Heart left ventricle (tissue), 16 donors: ENCODE measurements at regions of chr7 and their contacts with region 1.

Region 1: GRCh38 chr7:55255496-55256435 is 109.4 kb upstream of the LANCL2 start:
- DNase-seq: peak; percentile 76 to 88 (median 79)
- ATAC-seq: peak; percentile 87 to 97 (median 94)
- H3K4me3 ChIP-seq: peak overlapping the region; percentile 38 to 72 (median 60)
- H3K27ac ChIP-seq: peak overlapping the region in 5 of 12 donors; percentile 3 to 58 (median 45)
- H3K4me1 ChIP-seq: peaks cover 0 to 19% (median 10%) of the 10 kb centered on the region in 12 donors
- H3K27me3 ChIP-seq: peaks cover 0 to 41% (median 14%) of the 10 kb centered on the region in 9 donors
- CTCF ChIP-seq: peak; percentile 71 to 94 (median 88)
- POLR2A ChIP-seq: no peak

Region 2: GRCh38 chr7:54773472-54774399 is 482.0 kb before region 1 on chr7:
- intact Hi-C with region 1: loop called in 9 of 10 experiments (anchors 1 to 5 kb)
- DNase-seq: peak; percentile 77 to 84 (median 80)
- ATAC-seq: peak; percentile 82 to 97 (median 93)
- H3K4me3 ChIP-seq: peak overlapping the region in 10 of 12 donors; percentile 6 to 60 (median 39)
- H3K27ac ChIP-seq: no peak overlapping the region
- H3K4me1 ChIP-seq: peaks cover 0 to 5% (median 0%) of the 10 kb centered on the region in 12 donors
- H3K27me3 ChIP-seq: peaks cover 0 to 19% (median 0%) of the 10 kb centered on the region in 9 donors
- CTCF ChIP-seq: peak; percentile 61 to 89 (median 82)
- POLR2A ChIP-seq: no peak

Region 3: DNA sequence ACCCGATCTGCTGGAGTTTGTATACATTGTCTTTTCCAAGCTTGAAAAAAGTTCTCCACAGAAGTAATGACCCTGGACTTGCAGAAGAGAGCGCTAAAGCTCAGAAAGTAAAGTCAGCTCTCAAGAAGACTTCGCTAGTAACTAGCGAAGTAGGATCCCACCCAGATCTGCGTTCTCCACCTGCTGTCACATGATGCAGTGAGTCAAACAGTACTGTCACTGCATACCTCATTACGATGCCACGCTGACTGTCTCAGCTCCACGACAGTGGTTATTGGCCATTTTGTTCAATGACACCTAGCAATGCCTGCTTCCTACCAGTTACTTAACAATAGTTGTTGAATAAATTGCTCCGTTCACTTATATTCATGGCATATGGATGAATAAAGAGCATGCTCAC is 467.1 kb before region 1 on chr7:
- intact Hi-C with region 1: loop called in 7 of 10 experiments (anchors 1 to 5 kb)
- DNase-seq: no peak
- ATAC-seq: peak; percentile 55 to 82 (median 76)
- H3K4me3 ChIP-seq: no peak overlapping the region
- H3K27ac ChIP-seq: no peak overlapping the region
- H3K4me1 ChIP-seq: peaks cover 0 to 8% (median 2%) of the 10 kb centered on the region in 12 donors
- H3K27me3 ChIP-seq: no peaks in the 10 kb centered on the region
- CTCF ChIP-seq: peak; percentile 52 to 81 (median 71)
- POLR2A ChIP-seq: no peak

Region 4: GRCh38 chr7:54839538-54840213 is 416.1 kb before region 1 on chr7:
- intact Hi-C with region 1: loop called in 6 of 10 experiments (anchors 5 to 10 kb)
- DNase-seq: peak; percentile 78 to 88 (median 86)
- ATAC-seq: peak; percentile 83 to 95 (median 92)
- H3K4me3 ChIP-seq: no peak overlapping the region
- H3K27ac ChIP-seq: peak overlapping the region in 1 of 12 donors; percentile 26
- H3K4me1 ChIP-seq: peaks cover 0 to 52% (median 23%) of the 10 kb centered on the region in 12 donors
- H3K27me3 ChIP-seq: no peaks in the 10 kb centered on the region
- CTCF ChIP-seq: peak; percentile 54 to 74 (median 68)
- POLR2A ChIP-seq: no peak

Region 5: GRCh38 chr7:55132890-55133551 is 122.7 kb before region 1 on chr7:
- intact Hi-C with region 1: loop called in 4 of 10 experiments (anchors 5 to 10 kb)
- DNase-seq: peak in 2 of 5 donors; percentile 33 to 50
- ATAC-seq: peak in 2 of 4 donors; percentile 3 to 35
- H3K4me3 ChIP-seq: no peak overlapping the region
- H3K27ac ChIP-seq: peak overlapping the region in 11 of 12 donors; percentile 58 to 89 (median 77)
- H3K4me1 ChIP-seq: peaks cover 15 to 61% (median 51%) of the 10 kb centered on the region in 12 donors
- H3K27me3 ChIP-seq: no peaks in the 10 kb centered on the region
- CTCF ChIP-seq: no peak
- POLR2A ChIP-seq: no peak

Region 6: DNA sequence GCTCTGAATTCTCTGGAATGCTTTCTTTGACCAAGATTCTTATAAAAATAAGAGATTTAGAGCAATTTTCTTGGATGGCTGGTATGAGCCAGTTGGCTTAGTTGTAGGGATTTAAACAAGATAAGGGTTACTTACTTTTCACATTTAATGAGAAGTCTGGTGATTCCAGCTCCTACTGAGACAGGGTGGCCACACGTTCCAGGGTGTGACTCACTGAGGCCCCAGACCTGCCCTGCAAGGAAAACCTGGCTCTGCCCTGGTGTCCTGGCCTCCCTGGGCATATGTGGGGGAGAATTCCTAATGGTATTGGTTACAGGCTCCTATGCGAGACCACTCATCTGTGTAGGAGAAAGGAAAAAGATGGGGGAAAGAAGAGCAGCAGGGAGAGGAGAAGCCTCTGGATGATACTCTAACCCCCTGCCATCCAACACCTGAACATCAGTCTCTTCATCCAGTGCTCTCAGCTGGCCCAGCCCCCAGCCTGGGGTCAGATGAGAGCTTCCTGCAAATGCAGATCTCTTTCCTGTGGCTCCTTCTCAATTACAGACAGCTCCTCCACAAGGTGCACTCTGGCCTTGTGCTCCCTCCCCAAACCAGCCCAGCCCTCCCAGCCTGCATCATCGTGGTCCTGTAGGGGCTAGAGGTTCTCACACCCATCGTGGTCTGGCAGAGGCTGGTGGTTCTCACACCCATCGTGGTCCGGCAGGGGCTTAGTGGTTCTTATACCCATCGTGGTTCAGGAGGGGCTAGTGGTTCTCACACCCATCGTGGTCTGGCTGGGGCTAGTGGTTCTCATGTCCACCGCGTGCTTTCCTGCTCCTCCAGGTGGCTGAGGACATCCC is 97.0 kb before region 1 on chr7:
- intact Hi-C with region 1: loop called in 1 of 10 experiments (anchors 10 kb)
- DNase-seq: no peak
- ATAC-seq: peak in 1 of 4 donors; percentile 17
- H3K4me3 ChIP-seq: no peak overlapping the region
- H3K27ac ChIP-seq: no peak overlapping the region
- H3K4me1 ChIP-seq: peaks cover 0 to 10% (median 0%) of the 10 kb centered on the region in 12 donors
- H3K27me3 ChIP-seq: no peaks in the 10 kb centered on the region
- CTCF ChIP-seq: no peak
- POLR2A ChIP-seq: no peak

Region 7: DNA sequence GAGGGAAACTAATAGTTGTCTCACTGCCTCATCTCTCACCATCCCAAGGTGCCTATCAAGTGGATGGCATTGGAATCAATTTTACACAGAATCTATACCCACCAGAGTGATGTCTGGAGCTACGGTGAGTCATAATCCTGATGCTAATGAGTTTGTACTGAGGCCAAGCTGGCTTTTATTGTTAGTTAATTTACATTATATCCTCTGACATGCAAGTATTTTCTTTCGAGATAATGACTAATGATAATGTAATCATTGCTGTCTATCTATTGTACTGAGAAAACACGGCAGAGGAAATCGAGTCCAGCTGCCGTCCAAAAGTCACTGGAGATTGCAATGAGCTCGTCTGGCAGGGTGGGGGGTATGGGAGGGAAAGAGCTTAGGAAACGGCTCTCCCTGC is 63.0 kb before region 1 on chr7:
- intact Hi-C with region 1: loop called in 1 of 10 experiments (anchors 5 kb)
- DNase-seq: no peak
- ATAC-seq: peak in 2 of 4 donors; percentile 20 to 23
- H3K4me3 ChIP-seq: no peak overlapping the region
- H3K27ac ChIP-seq: peak overlapping the region in 9 of 12 donors; percentile 0 to 50 (median 29)
- H3K4me1 ChIP-seq: peaks cover 0 to 49% (median 19%) of the 10 kb centered on the region in 12 donors
- H3K27me3 ChIP-seq: no peaks in the 10 kb centered on the region
- CTCF ChIP-seq: no peak
- POLR2A ChIP-seq: no peak

Region 8: DNA sequence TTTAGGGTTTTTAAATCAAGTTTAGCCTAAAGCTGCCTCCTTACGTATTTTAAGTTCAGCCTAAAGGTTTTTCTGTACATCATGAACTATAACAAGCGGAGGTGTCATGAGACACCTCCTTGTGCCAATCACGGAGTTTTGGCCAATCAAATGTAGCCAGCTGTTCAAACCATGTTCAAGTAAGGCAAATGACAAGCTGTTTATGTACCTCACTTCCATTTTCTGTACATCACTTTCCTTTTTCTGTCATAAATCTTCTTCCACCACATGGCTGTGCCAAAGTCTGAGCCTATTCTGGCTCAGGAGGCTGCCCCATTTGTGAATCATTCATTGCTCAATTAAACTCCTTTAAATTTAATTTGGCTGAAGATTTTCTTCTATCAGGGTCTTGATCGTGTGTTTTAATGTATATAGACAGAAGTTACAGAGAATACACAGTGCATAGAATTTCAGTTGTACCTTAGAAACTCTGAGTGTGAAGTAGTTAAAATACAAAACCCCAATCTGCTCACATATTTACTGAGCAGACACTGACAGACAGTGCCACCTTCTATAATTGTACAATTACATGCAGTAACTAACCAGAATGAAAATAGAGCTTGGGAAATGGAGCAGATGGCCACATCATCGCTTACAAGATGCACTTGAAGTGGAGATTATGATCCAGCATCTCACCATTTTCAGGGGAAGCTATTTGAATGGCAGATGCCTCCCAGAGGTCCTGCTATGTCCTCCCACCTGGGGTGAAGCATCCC is 32.5 kb after region 1 on chr7:
- intact Hi-C with region 1: no loop called
- DNase-seq: no peak
- ATAC-seq: no peak
- H3K4me3 ChIP-seq: no peak overlapping the region
- H3K27ac ChIP-seq: no peak overlapping the region
- H3K4me1 ChIP-seq: no peaks in the 10 kb centered on the region
- H3K27me3 ChIP-seq: peaks cover 0 to 13% (median 0%) of the 10 kb centered on the region in 9 donors
- CTCF ChIP-seq: no peak
- POLR2A ChIP-seq: no peak

Region 9: DNA sequence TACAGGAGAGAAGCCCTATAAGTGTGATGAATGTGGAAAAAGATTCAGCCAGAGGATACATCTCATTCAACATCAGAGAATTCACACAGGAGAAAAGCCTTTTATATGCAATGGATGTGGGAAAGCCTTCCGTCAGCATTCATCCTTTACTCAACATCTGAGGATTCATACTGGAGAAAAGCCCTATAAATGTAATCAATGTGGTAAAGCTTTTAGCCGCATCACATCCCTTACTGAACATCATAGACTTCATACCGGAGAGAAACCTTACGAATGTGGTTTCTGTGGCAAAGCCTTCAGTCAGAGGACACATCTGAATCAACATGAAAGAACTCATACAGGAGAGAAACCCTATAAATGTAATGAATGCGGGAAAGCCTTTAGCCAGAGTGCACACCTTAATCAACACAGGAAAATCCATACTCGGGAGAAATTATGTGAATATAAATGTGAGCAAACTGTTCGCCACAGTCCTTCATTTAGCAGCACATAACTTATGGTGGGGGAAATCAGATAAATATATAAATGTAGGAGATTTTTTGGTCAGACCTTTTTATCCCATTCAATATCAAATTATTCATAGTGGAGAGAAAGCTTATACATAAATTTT is 683.9 kb after region 1 on chr7:
- intact Hi-C with region 1: no loop called
- DNase-seq: no peak
- ATAC-seq: no peak
- H3K4me3 ChIP-seq: no peak overlapping the region
- H3K27ac ChIP-seq: no peak overlapping the region
- H3K4me1 ChIP-seq: no peaks in the 10 kb centered on the region
- H3K27me3 ChIP-seq: no peaks in the 10 kb centered on the region
- CTCF ChIP-seq: no peak
- POLR2A ChIP-seq: no peak